A673 (cell line): ENCODE measurements at regions of chr2 and their contacts with region 1.

Region 1: GRCh38 chr2:225472161-225472560 is 72.7 kb downstream of the NYAP2 start:
- DNase-seq: no peak
- H3K4me3 ChIP-seq: no peak overlapping the region
- H3K27ac ChIP-seq: no peak overlapping the region
- H3K4me1 ChIP-seq: no peaks in the 10 kb centered on the region
- H3K27me3 ChIP-seq: no peaks in the 10 kb centered on the region
- CTCF ChIP-seq: no peak

Region 2: GRCh38 chr2:225296951-225297350 is 175.2 kb before region 1 on chr2:
- CTCF ChIA-PET with region 1: interaction called, 12 read pairs
- POLR2A ChIA-PET with region 1: no interaction called
- intact Hi-C with region 1: no loop called
- DNase-seq: no peak
- H3K4me3 ChIP-seq: no peak overlapping the region
- H3K27ac ChIP-seq: no peak overlapping the region
- H3K4me1 ChIP-seq: no peaks in the 10 kb centered on the region
- H3K27me3 ChIP-seq: no peaks in the 10 kb centered on the region
- CTCF ChIP-seq: no peak